ENCODE measurements at regions of chr12 and their contacts with region 1.

Region 1: GRCh38 chr12:6965026-6965661 is 5.3 kb downstream of the PHB2 start:
- DNase-seq: peak; percentile 64
- ATAC-seq: peak; percentile 62
- H3K4me3 ChIP-seq: no peak overlapping the region
- H3K27ac ChIP-seq: no peak overlapping the region
- H3K4me1 ChIP-seq: peaks cover 25% of the 10 kb centered on the region
- H3K27me3 ChIP-seq: no peaks in the 10 kb centered on the region
- CTCF ChIP-seq: peak; percentile 77

Region 2: GRCh38 chr12:6863586-6864321 is 101.4 kb before region 1 on chr12:
- CTCF ChIA-PET with region 1: no interaction called
- POLR2A ChIA-PET with region 1: no interaction called
- intact Hi-C with region 1: no loop called
- DNase-seq: no peak
- ATAC-seq: no peak
- H3K4me3 ChIP-seq: no peak overlapping the region
- H3K27ac ChIP-seq: no peak overlapping the region
- H3K4me1 ChIP-seq: peaks cover 9% of the 10 kb centered on the region
- H3K27me3 ChIP-seq: no peaks in the 10 kb centered on the region
- CTCF ChIP-seq: no peak

Region 3: DNA sequence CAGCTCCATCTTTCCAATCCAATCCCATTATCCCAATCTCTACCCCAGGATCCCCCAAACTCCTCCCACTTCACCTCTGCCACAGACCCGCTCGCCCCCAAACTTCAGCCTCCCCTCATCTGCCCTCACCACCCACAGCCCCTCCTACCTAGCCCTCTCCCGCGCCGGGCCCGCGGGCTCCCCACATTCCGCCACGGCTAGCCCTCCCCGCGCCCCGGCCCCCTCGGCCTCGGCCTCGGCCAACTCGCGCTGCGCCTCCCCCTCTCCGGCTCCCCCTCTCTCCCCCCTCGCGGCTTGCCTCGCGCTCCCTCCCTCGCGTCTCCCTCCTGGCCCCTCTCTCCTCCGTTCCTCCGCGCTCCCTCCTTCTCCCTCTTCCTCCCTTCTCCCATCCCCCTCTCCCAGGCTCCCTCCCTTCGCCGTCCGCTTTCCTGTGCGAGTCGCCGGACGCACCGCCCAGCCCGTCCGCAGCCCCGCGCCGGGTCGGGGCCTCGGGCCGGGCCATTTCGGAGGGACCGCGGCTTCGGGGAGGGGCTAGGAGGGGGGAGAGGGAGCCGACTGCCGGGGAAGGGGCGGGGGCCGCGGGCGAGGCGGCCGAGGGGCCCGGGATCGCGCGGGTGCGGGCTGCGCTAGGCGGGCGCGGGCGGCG is 37.6 kb before region 1 on chr12 and contains the start of gene ATN1:
- CTCF ChIA-PET with region 1: interaction called, 4 read pairs
- POLR2A ChIA-PET with region 1: no interaction called
- intact Hi-C with region 1: loop called (anchors 1 kb)
- DNase-seq: peak; percentile 53
- ATAC-seq: peak; percentile 26
- H3K4me3 ChIP-seq: peak within 1 kb of the TSS; percentile 93
- H3K27ac ChIP-seq: no peak within 1 kb of the TSS
- H3K4me1 ChIP-seq: peaks cover 43% of the 10 kb centered on the region
- H3K27me3 ChIP-seq: no peaks in the 10 kb centered on the region
- CTCF ChIP-seq: no peak
- total RNA-seq, gene ATN1: 11.6 and 41.5 TPM in 2 replicates

Region 4: GRCh38 chr12:7197841-7198240 is 232.7 kb after region 1 on chr12:
- CTCF ChIA-PET with region 1: no interaction called
- POLR2A ChIA-PET with region 1: no interaction called
- intact Hi-C with region 1: no loop called
- DNase-seq: no peak
- ATAC-seq: no peak
- H3K4me3 ChIP-seq: no peak overlapping the region
- H3K27ac ChIP-seq: no peak overlapping the region
- H3K4me1 ChIP-seq: no peaks in the 10 kb centered on the region
- H3K27me3 ChIP-seq: no peaks in the 10 kb centered on the region
- CTCF ChIP-seq: no peak